Colonic mucosa (tissue), 4 donors: ENCODE measurements at regions of chr2 and their contacts with region 1.

Region 1: DNA sequence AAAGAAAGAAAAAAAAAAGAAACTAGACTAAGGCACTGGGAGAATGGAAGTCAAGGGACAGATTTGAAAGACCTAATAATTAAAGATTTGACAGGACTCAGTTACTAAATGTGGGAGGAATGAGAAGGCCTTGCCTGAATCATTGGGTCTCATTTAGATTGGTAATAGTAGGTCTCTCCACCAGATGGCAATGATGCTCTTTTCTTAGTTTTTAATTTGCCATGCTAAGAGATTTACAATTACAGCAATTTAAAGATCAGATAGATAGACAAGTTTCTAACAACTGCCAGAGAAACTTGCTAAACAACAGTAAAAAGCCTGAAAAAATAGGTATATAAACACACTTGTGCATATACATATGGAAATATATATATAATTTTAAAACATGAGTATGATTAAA is 153.0 kb downstream of the TMEM247 start:
- DNase-seq: no peak
- H3K4me3 ChIP-seq: no peak overlapping the region
- H3K27ac ChIP-seq: no peak overlapping the region
- H3K4me1 ChIP-seq: no peaks in the 10 kb centered on the region
- H3K27me3 ChIP-seq: no peaks in the 10 kb centered on the region
- CTCF ChIP-seq: no peak

Region 2: GRCh38 chr2:46887028-46887885 is 254.9 kb after region 1 on chr2:
- intact Hi-C with region 1: loop called (anchors 5 kb)
- DNase-seq: no peak
- H3K4me3 ChIP-seq: no peak overlapping the region
- H3K27ac ChIP-seq: no peak overlapping the region
- H3K4me1 ChIP-seq: no peaks in the 10 kb centered on the region
- H3K27me3 ChIP-seq: no peaks in the 10 kb centered on the region
- CTCF ChIP-seq: no peak